ENCODE measurements at regions of chr9 and their contacts with region 1.

Region 1: GRCh38 chr9:115591584-115591984 is 473.6 kb upstream of the TNC start:
- DNase-seq: peak; percentile 96
- H3K4me3 ChIP-seq: no peak overlapping the region
- H3K27ac ChIP-seq: peak overlapping the region; percentile 99
- H3K4me1 ChIP-seq: peaks cover 44% of the 10 kb centered on the region
- H3K27me3 ChIP-seq: no peaks in the 10 kb centered on the region
- CTCF ChIP-seq: peak; percentile 79

Region 2: DNA sequence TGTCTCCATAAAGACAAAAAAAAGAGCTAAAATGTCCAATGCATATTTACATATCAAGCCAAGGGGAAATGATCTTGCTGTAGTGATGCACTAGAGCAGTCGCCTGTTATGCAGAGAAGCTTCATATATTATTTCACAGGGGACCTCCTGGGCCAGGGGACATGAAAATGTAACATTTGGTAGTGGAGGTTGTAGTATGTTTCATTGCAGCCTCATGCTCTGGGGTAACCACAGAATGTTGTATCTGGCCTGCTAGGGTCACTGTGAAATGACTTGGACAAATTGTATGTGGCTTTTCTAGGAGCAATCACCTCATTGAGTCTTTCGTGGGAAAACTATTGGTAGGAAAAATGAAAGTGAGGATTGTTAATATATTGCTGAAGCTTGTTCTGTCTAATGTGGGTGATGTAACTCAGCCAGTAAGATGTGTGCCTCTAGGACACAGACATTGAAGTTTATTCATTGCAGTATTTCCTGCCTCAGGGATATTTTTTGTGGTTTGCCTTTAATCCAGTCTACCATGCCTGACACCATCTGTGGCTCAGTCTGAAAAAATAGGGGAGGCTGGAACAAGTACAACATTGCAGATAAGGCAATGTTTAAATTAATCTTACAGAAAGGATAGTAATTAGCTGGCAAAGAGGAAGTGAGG is 42.8 kb before region 1 on chr9:
- CTCF ChIA-PET with region 1: no interaction called
- POLR2A ChIA-PET with region 1: no interaction called
- intact Hi-C with region 1: no loop called
- DNase-seq: no peak
- H3K4me3 ChIP-seq: no peak overlapping the region
- H3K27ac ChIP-seq: peak overlapping the region; percentile 5
- H3K4me1 ChIP-seq: peaks cover 40% of the 10 kb centered on the region
- H3K27me3 ChIP-seq: no peaks in the 10 kb centered on the region
- CTCF ChIP-seq: no peak

Region 3: DNA sequence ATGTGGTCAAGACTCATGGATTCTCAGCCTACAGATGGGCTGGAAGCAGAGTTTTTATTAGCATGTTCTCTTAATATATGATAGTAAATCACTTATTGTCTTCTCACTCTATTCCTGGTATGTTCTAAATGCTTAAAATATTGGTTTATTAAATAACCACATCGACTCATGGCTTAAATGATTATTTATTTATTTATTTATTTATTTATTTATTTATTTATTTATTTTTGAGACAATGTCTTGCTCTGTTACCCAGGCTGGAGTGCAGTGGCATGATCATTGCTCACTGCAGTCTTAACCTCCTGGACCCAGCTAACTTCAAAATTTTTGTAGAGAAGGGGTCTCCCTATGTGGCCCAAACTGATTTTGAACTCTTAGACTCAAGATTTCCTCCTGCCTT is 16.4 kb before region 1 on chr9:
- CTCF ChIA-PET with region 1: no interaction called
- POLR2A ChIA-PET with region 1: no interaction called
- intact Hi-C with region 1: no loop called
- DNase-seq: no peak
- H3K4me3 ChIP-seq: no peak overlapping the region
- H3K27ac ChIP-seq: no peak overlapping the region
- H3K4me1 ChIP-seq: no peaks in the 10 kb centered on the region
- H3K27me3 ChIP-seq: no peaks in the 10 kb centered on the region
- CTCF ChIP-seq: no peak

Region 4: GRCh38 chr9:115694014-115694413 is 102.4 kb after region 1 on chr9:
- CTCF ChIA-PET with region 1: interaction called, 4 read pairs
- POLR2A ChIA-PET with region 1: interaction called, 5 read pairs
- intact Hi-C with region 1: loop called (anchors 2 kb)
- DNase-seq: peak; percentile 89
- H3K4me3 ChIP-seq: no peak overlapping the region
- H3K27ac ChIP-seq: peak overlapping the region; percentile 54
- H3K4me1 ChIP-seq: peaks cover 24% of the 10 kb centered on the region
- H3K27me3 ChIP-seq: no peaks in the 10 kb centered on the region
- CTCF ChIP-seq: peak; percentile 57

Region 5: GRCh38 chr9:115980976-115981375 is 389.4 kb after region 1 on chr9:
- CTCF ChIA-PET with region 1: no interaction called
- POLR2A ChIA-PET with region 1: no interaction called
- intact Hi-C with region 1: loop called (anchors 5 kb)
- DNase-seq: peak; percentile 91
- H3K4me3 ChIP-seq: no peak overlapping the region
- H3K27ac ChIP-seq: peak overlapping the region; percentile 51
- H3K4me1 ChIP-seq: peaks cover 47% of the 10 kb centered on the region
- H3K27me3 ChIP-seq: no peaks in the 10 kb centered on the region
- CTCF ChIP-seq: no peak

Region 6: DNA sequence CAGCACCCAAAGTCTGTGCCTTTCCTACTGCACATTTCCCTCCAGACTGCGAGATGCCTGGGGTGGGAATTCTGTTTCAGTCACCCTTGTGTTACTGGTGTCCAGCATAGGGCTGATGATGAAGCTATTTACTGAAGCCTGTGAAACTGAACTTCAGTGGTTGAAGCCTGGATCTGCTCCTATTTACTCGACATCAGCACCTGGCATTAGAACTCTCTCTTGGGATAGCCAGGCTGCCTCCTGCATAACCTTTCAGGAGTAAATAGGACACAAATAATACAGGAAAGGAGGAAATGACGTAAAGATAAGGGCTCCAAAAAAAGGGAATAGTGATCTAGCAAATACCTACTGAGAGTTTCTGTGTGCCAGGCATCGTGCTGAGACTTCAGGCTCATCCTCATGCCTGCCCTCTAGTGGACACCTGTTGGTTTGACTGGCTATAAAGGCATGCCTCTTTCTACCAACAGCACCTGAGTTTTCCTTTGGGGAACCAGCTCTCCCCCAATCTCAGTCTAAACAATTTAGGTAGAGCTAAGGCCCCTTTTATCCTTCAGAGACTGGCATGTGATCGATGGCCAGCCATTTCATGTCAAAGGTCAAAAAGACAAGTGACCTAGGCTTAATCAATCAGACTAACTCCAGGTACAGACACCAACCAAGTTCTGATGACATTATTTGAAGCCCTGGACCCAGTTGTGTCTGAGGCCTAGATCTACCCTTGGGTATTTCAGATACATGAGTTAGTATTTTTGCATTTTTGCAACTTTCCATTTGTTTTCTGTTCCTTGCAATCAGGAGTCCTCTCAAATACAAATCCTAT is 903.4 kb after region 1 on chr9:
- CTCF ChIA-PET with region 1: no interaction called
- POLR2A ChIA-PET with region 1: no interaction called
- intact Hi-C with region 1: loop called (anchors 5 kb)
- DNase-seq: peak; percentile 44
- H3K4me3 ChIP-seq: no peak overlapping the region
- H3K27ac ChIP-seq: no peak overlapping the region
- H3K4me1 ChIP-seq: peaks cover 6% of the 10 kb centered on the region
- H3K27me3 ChIP-seq: no peaks in the 10 kb centered on the region
- CTCF ChIP-seq: peak; percentile 78

Region 7: DNA sequence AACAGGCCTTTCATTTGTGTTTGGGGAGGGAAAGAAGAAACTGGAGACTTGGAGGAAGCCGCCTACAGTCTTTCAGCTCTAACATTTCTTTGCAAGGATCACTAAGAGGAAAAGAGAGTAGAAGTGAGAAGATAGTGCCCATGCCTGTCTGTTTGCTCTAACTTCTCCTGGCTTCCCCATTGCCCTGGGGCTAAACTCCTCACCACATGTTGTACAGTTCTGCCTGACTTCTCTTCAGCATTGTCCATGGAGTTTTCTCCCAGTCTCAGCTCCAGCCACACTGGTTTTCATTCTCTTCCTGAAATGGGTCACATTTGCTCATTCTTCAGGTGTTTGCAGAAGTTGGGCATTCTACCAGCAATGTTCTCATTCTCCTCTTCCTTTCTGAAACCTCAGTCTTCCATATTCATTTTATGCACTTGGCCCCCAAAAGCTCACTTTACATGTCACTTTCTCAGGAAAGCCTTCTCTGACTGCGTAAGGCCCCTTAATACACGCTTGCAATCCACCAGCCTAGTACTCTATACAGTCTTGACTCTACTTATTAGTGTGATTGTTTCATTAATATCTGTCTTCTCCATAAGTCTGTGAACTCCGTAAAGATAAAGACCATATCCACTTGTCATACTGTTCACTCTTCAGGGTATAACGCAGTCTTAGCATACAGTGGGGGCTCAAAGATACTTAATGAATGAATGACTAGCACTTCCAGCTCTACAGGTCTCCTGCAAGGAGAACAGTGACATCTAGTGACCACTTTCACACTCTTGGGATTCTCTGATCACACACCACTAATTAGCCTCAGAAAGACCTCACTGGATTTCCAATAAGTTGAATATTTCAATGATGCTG is 1055.3 kb after region 1 on chr9:
- CTCF ChIA-PET with region 1: interaction called, 5 read pairs
- POLR2A ChIA-PET with region 1: no interaction called
- intact Hi-C with region 1: loop called (anchors 1 kb)
- DNase-seq: peak; percentile 81
- H3K4me3 ChIP-seq: no peak overlapping the region
- H3K27ac ChIP-seq: no peak overlapping the region
- H3K4me1 ChIP-seq: peaks cover 8% of the 10 kb centered on the region
- H3K27me3 ChIP-seq: no peaks in the 10 kb centered on the region
- CTCF ChIP-seq: peak; percentile 83

Region 8: GRCh38 chr9:116860509-116861120 is 1269.0 kb after region 1 on chr9:
- CTCF ChIA-PET with region 1: no interaction called
- POLR2A ChIA-PET with region 1: no interaction called
- intact Hi-C with region 1: loop called (anchors 5 kb)
- DNase-seq: peak; percentile 76
- H3K4me3 ChIP-seq: no peak overlapping the region
- H3K27ac ChIP-seq: no peak overlapping the region
- H3K4me1 ChIP-seq: no peaks in the 10 kb centered on the region
- H3K27me3 ChIP-seq: no peaks in the 10 kb centered on the region
- CTCF ChIP-seq: peak; percentile 83